ENCODE measurements at regions of chr20 and their contacts with region 1.

Region 1: DNA sequence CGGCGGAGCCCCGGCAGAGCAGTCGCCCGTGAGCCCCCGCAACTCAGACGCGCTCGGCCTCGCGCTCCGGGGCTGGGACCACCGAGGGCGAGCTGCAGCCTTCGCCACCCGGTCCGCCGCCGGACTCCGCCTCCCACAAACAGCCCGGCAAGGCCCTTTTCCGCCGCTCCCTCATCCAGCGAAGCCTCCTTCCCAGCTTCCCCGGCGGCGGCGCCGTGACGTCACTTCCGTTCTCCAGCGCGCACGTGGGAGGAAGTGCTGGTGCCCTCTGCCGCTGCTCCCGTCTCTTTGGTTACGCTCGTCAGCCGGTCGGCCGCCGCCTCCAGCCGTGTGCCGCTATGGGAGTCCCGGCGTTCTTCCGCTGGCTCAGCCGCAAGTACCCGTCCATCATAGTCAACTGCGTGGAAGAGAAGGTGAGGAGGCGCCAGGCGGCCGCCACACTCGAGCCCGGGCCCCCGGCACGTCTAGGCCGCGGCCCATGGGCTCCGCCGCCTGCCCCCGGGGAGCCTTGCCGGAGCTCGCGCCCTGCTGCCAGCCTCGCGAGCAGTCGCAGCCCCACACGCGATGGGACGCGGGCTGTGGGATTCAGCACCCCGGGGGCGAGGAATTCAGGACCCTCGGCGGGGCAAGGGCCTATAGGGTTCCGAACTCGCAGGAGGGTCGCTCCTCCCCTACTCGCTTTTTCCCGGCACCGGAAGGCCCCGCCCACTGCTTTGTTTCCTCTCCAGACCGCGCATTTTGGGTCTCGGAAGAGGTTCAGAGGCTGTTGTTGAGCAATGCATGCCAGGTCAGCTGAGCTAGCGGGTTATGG is at the start of gene XRN2:
- DNase-seq: peak; percentile 93
- H3K4me3 Mint-ChIP-seq: peak within 1 kb of the TSS; percentile 97
- H3K27ac Mint-ChIP-seq: peak within 1 kb of the TSS; percentile 96
- H3K4me1 Mint-ChIP-seq: peaks cover 40% of the 10 kb centered on the region
- H3K27me3 Mint-ChIP-seq: peaks cover 4% of the 10 kb centered on the region
- total RNA-seq, gene XRN2: 92.1 and 94.0 TPM in 2 replicates

Region 2: GRCh38 chr20:20712474-20713243 is 590.6 kb before region 1 on chr20 and contains the start of gene RALGAPA2:
- intact Hi-C with region 1: loop called (anchors 1 kb)
- DNase-seq: peak; percentile 91
- H3K4me3 Mint-ChIP-seq: peak within 1 kb of the TSS; percentile 95
- H3K27ac Mint-ChIP-seq: peak within 1 kb of the TSS; percentile 89
- H3K4me1 Mint-ChIP-seq: peaks cover 33% of the 10 kb centered on the region
- H3K27me3 Mint-ChIP-seq: no peaks in the 10 kb centered on the region
- total RNA-seq, gene RALGAPA2: 18.0 and 19.6 TPM in 2 replicates

Region 3: DNA sequence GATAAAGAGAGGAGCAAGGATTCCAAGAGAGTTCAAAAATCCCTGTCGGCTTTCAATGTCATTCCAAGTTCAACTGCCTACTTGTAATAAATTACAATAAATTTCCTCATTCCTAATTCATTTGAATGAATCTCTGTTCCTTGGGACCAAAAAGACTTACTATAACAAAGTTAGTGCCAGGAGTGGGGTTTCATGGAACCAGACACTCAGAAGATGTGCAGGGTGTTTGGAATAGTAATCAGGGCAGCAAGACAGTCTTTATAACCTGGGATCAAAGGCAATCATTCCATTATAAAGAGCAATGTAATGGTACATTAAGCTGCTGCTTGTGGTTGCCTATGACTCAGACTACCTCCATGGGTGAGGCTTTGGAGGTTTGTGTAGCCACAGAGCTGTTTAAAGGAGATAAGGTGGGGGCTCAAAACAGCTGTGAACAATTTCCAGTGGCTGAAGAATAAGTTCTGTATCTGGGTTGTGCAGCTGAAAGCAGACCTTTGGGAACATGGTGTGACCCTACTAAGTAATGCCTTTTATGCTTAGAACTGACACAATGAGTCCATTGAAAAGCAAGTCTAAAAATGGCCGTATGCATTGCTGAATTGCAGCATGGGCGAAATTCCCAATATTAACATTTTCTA is 357.0 kb before region 1 on chr20:
- intact Hi-C with region 1: no loop called
- DNase-seq: no peak
- H3K4me3 Mint-ChIP-seq: no peak overlapping the region
- H3K27ac Mint-ChIP-seq: no peak overlapping the region
- H3K4me1 Mint-ChIP-seq: no peaks in the 10 kb centered on the region
- H3K27me3 Mint-ChIP-seq: peaks cover 2% of the 10 kb centered on the region

Region 4: GRCh38 chr20:20969701-20970280 is 333.5 kb before region 1 on chr20:
- intact Hi-C with region 1: no loop called
- DNase-seq: no peak
- H3K4me3 Mint-ChIP-seq: no peak overlapping the region
- H3K27ac Mint-ChIP-seq: no peak overlapping the region
- H3K4me1 Mint-ChIP-seq: no peaks in the 10 kb centered on the region
- H3K27me3 Mint-ChIP-seq: no peaks in the 10 kb centered on the region

Region 5: GRCh38 chr20:21125849-21126580 is 177.3 kb before region 1 on chr20 and contains the start of gene KIZ:
- intact Hi-C with region 1: loop called (anchors 1 kb)
- DNase-seq: peak; percentile 96
- H3K4me3 Mint-ChIP-seq: peak within 1 kb of the TSS; percentile 82
- H3K27ac Mint-ChIP-seq: peak within 1 kb of the TSS; percentile 79
- H3K4me1 Mint-ChIP-seq: peaks cover 15% of the 10 kb centered on the region
- H3K27me3 Mint-ChIP-seq: peaks cover 3% of the 10 kb centered on the region
- total RNA-seq, gene KIZ: 9.3 and 11.8 TPM in 2 replicates

Region 6: DNA sequence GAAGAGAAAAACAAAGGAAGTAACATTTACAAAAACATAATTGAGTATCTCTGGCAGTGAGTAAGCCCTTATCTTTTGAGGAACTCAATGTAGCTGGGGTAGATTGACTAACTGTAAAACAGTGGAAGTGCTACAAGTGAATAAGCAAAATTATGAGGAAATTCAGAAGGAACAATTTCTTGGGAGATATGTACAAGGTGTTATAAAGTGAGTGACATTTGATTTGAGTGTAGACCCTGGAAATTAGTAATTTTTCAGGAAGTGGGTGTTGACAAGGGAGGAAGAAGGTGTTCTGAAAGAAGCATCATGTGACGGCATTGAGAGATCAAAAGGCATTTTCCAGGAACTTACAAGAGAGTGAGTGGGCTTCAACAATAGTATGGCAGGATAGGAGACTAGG is 22.0 kb after region 1 on chr20:
- intact Hi-C with region 1: loop called (anchors 1 kb)
- DNase-seq: no peak
- H3K4me3 Mint-ChIP-seq: peak overlapping the region; percentile 35
- H3K27ac Mint-ChIP-seq: peak overlapping the region; percentile 57
- H3K4me1 Mint-ChIP-seq: peaks cover 50% of the 10 kb centered on the region
- H3K27me3 Mint-ChIP-seq: no peaks in the 10 kb centered on the region

Region 7: GRCh38 chr20:21395666-21396598 is 92.7 kb after region 1 on chr20:
- intact Hi-C with region 1: loop called (anchors 1 kb)
- DNase-seq: peak; percentile 43
- H3K4me3 Mint-ChIP-seq: peak overlapping the region; percentile 77
- H3K27ac Mint-ChIP-seq: peak overlapping the region; percentile 73
- H3K4me1 Mint-ChIP-seq: peaks cover 38% of the 10 kb centered on the region
- H3K27me3 Mint-ChIP-seq: peaks cover 77% of the 10 kb centered on the region

Measured in activated T-helper 1 cell treated with anti-CD3 and anti-CD28 coated beads, Interleukin-12 subunit alpha, Interleukin-12 subunit beta, Interleukin-2, Interleukin-4 antibody, amounts not matched to agents 30 ng/mL and 10 ng/mL and 1 ng/mL, durations not matched to agents 14 hours and 24 hours and 36 hours (primary cell).